Activated B cell treated with CpG ODN at 0.5 μM for 24 hours (primary cell): ENCODE measurements at regions of chr3 and their contacts with region 1.

Region 1: GRCh38 chr3:101724329-101725193 is at the start of gene CEP97:
- DNase-seq: peak; percentile 78
- ATAC-seq: peak; percentile 92
- H3K4me3 Mint-ChIP-seq: peak within 1 kb of the TSS; percentile 98
- H3K27ac Mint-ChIP-seq: peak within 1 kb of the TSS; percentile 97
- H3K4me1 Mint-ChIP-seq: peaks cover 40% of the 10 kb centered on the region
- H3K27me3 Mint-ChIP-seq: no peaks in the 10 kb centered on the region
- CTCF ChIP-seq: no peak
- total RNA-seq, gene CEP97: 7.3 and 7.9 TPM in 2 replicates

Region 2: GRCh38 chr3:100386437-100387074 is 1338.0 kb before region 1 on chr3:
- CTCF ChIA-PET with region 1: no interaction called
- POLR2A ChIA-PET with region 1: no interaction called
- intact Hi-C with region 1: no loop called
- DNase-seq: no peak
- ATAC-seq: no peak
- H3K4me3 Mint-ChIP-seq: no peak overlapping the region
- H3K27ac Mint-ChIP-seq: no peak overlapping the region
- H3K4me1 Mint-ChIP-seq: no peaks in the 10 kb centered on the region
- H3K27me3 Mint-ChIP-seq: no peaks in the 10 kb centered on the region
- CTCF ChIP-seq: no peak

Region 3: DNA sequence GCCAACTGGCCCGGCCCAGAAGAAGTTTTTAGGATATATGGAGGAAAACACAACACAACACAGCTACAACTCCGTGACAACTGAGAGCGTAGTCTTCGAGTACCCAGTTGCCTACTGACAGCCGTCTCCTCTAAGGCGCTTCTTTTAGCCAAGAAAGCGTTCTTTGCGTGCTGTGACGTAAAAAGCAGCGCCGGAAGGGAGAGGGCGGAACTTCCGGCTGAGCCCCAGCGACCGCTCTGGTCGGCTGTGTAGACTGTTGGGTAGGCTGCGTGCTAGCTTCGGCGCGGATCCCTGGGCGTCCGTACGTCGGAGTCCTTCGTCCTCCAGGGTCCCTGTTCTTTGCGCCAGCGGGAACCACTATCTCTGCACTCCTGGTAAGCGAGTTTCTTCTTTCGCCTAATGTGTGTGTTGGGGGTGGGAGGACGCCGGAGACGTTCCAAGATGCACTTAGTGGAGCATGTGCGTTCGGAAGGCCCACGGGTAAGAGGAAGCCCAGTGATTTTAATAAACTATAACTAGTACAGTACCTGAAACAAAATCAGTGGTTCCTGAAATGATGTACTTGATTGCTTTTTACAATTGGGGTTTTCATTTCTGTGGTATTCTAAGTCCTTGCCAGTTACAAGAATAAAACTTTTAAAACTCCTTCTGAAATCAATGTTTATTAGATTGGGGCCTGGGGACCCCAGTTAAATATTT is 162.8 kb before region 1 on chr3 and contains the start of gene TRMT10C:
- CTCF ChIA-PET with region 1: no interaction called
- POLR2A ChIA-PET with region 1: no interaction called
- intact Hi-C with region 1: loop called (anchors 1 kb)
- DNase-seq: peak; percentile 88
- ATAC-seq: peak; percentile 96
- H3K4me3 Mint-ChIP-seq: peak within 1 kb of the TSS; percentile 99
- H3K27ac Mint-ChIP-seq: peak within 1 kb of the TSS; percentile 95
- H3K4me1 Mint-ChIP-seq: peaks cover 42% of the 10 kb centered on the region
- H3K27me3 Mint-ChIP-seq: peaks cover 4% of the 10 kb centered on the region
- CTCF ChIP-seq: no peak
- total RNA-seq, gene TRMT10C: 33.5 and 34.6 TPM in 2 replicates

Region 4: GRCh38 chr3:101685870-101686412 is 38.6 kb before region 1 on chr3:
- CTCF ChIA-PET with region 1: interaction called, 6 read pairs
- POLR2A ChIA-PET with region 1: interaction called, 24 read pairs
- intact Hi-C with region 1: loop called (anchors 1 kb)
- DNase-seq: no peak
- ATAC-seq: peak; percentile 6
- H3K4me3 Mint-ChIP-seq: peak overlapping the region; percentile 100
- H3K27ac Mint-ChIP-seq: peak overlapping the region; percentile 99
- H3K4me1 Mint-ChIP-seq: peaks cover 40% of the 10 kb centered on the region
- H3K27me3 Mint-ChIP-seq: no peaks in the 10 kb centered on the region
- CTCF ChIP-seq: no peak

Region 5: DNA sequence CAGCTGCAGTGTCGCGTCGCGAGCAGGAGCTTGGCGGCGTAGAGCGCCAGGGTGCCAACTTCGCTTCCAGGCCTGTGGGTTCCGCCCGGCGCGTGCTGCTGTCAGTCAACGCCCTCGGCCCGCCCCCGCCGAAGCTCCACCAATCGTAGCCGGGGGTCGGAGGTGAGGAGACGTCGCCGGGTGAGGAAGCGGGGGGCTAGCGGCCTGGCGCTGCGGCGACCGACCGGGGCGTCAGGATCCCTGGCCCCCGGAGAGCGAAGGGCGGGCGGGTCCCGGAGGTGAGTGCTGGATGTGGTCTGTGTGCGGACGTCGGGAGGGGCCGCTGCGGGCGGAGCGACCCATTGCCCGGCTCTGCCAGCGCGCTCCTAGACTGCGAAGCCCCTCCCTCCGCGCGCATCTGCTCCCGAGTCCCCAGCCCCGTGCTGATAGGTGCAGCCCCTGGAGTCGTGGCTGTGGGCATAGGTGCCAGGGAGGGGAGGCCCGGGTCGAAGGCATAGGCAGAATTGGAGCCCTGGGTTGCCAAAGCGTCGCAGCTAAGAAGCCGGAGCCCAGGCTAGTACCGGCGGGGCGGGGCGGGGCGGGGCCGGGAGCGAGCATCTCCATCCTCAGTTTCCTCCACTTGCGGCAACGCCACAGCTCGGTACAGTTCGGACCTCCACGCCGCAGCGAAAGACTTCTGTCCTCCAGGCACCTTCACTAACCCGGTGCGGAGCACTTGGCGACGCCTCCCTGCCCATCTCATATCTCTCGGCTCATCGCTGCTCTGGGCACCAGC is 54.7 kb after region 1 on chr3 and contains the start of gene NXPE3:
- CTCF ChIA-PET with region 1: interaction called, 3 read pairs
- POLR2A ChIA-PET with region 1: interaction called, 17 read pairs
- intact Hi-C with region 1: loop called (anchors 1 kb)
- DNase-seq: peak; percentile 94
- ATAC-seq: peak; percentile 92
- H3K4me3 Mint-ChIP-seq: peak within 1 kb of the TSS; percentile 87
- H3K27ac Mint-ChIP-seq: peak within 1 kb of the TSS; percentile 94
- H3K4me1 Mint-ChIP-seq: peaks cover 31% of the 10 kb centered on the region
- H3K27me3 Mint-ChIP-seq: no peaks in the 10 kb centered on the region
- CTCF ChIP-seq: no peak
- total RNA-seq, gene NXPE3: 15.8 and 16.0 TPM in 2 replicates

Region 6: GRCh38 chr3:101827211-101828174 is 102.9 kb after region 1 on chr3:
- CTCF ChIA-PET with region 1: no interaction called
- POLR2A ChIA-PET with region 1: interaction called, 3 read pairs
- intact Hi-C with region 1: loop called (anchors 1 kb)
- DNase-seq: peak; percentile 68
- ATAC-seq: peak; percentile 86
- H3K4me3 Mint-ChIP-seq: peak overlapping the region; percentile 87
- H3K27ac Mint-ChIP-seq: peak overlapping the region; percentile 98
- H3K4me1 Mint-ChIP-seq: peaks cover 66% of the 10 kb centered on the region
- H3K27me3 Mint-ChIP-seq: no peaks in the 10 kb centered on the region
- CTCF ChIP-seq: no peak